K562 (cell line): ENCODE measurements at regions of chr14 and their contacts with region 1.

Region 1: GRCh38 chr14:21269252-21270046 is at the start of gene HNRNPC:
- DNase-seq: peak; percentile 92 to 97 (median 94)
- ATAC-seq: peak; percentile 92
- H3K4me3 ChIP-seq: peak within 1 kb of the TSS; percentile 71
- H3K27ac ChIP-seq: peak within 1 kb of the TSS; percentile 96
- H3K4me1 ChIP-seq: peaks cover 13 to 16% of the 10 kb centered on the region in 2 experiments; a peak in 4 of 5 replicates
- H3K27me3 ChIP-seq: no peaks in the 10 kb centered on the region
- CTCF ChIP-seq: no peak
- EP300 ChIP-seq: no peak
- POLR2A ChIP-seq: peak; percentile 98
- RAD21 ChIP-seq: no peak
- polyA plus RNA-seq, gene HNRNPC: 679 to 1,238 TPM

Region 2: GRCh38 chr14:21145437-21145836 is 124.0 kb before region 1 on chr14:
- CTCF ChIA-PET with region 1: no interaction called
- POLR2A ChIA-PET with region 1: no interaction called
- in situ Hi-C with region 1: no loop called
- intact Hi-C with region 1: no loop called
- DNase-seq: no peak
- ATAC-seq: no peak
- H3K4me3 ChIP-seq: no peak overlapping the region
- H3K27ac ChIP-seq: no peak overlapping the region
- H3K4me1 ChIP-seq: no peaks in the 10 kb centered on the region; a peak in 1 of 5 replicates
- H3K27me3 ChIP-seq: no peaks in the 10 kb centered on the region
- CTCF ChIP-seq: no peak
- EP300 ChIP-seq: no peak
- POLR2A ChIP-seq: no peak
- RAD21 ChIP-seq: no peak

Region 3: GRCh38 chr14:21257394-21257909 is 12.0 kb before region 1 on chr14:
- CTCF ChIA-PET with region 1: no interaction called
- POLR2A ChIA-PET with region 1: interaction called, 58 read pairs
- in situ Hi-C with region 1: no loop called
- intact Hi-C with region 1: no loop called
- DNase-seq: no peak
- ATAC-seq: peak; percentile 23
- H3K4me3 ChIP-seq: no peak overlapping the region
- H3K27ac ChIP-seq: no peak overlapping the region
- H3K4me1 ChIP-seq: peaks cover 4 to 5% of the 10 kb centered on the region in 2 experiments; a peak in 4 of 5 replicates
- H3K27me3 ChIP-seq: no peaks in the 10 kb centered on the region
- CTCF ChIP-seq: no peak
- EP300 ChIP-seq: no peak
- POLR2A ChIP-seq: peak; percentile 18; the same call in 1 of the 2 replicates
- RAD21 ChIP-seq: no peak

Region 4: DNA sequence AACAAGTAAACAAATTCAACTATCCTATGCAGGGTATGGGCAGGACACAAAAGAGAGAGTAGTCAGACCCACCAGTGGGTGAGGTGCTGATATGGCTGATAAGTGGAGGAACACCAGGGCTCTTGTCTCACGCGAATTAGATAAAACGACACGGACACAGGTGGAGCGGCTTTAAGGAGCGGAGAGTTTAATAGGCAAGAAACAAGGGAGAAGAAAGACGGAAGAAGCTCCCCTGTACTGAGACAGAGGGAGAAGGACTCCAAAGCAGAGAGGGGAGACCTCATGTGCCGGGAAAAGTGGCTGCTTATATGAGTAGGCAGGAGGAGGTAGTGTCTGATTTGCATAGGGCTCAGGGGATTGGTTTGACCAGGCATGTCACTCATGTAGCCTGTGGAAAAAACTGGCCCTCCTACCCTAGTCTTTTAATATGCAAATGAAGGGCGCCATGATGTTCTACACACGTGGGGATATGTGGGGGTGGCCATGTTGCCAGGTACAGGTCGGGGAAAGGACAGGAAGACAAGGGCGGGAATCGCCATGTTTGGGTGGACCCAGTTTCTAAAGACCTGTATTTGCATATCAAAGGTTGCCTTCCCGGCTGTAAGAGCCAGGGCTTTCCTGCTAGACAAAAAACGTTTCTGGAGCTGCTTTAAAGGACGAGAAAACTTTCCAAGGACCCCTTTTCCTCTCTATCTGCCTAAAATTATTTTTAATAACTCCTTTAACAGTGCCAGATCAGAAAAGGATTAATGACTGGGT is 39.2 kb after region 1 on chr14:
- CTCF ChIA-PET with region 1: no interaction called
- POLR2A ChIA-PET with region 1: interaction called, 4 read pairs
- in situ Hi-C with region 1: no loop called
- intact Hi-C with region 1: loop called (anchors 5 kb)
- DNase-seq: peak; percentile 39 to 93 (median 56)
- ATAC-seq: peak; percentile 94
- H3K4me3 ChIP-seq: peak overlapping the region; percentile 32
- H3K27ac ChIP-seq: peak overlapping the region; percentile 98
- H3K4me1 ChIP-seq: peaks cover 0 to 10% of the 10 kb centered on the region in 2 experiments; a peak in 3 of 5 replicates
- H3K27me3 ChIP-seq: no peaks in the 10 kb centered on the region
- CTCF ChIP-seq: no peak
- EP300 ChIP-seq: no peak
- POLR2A ChIP-seq: peak; percentile 95
- RAD21 ChIP-seq: no peak

Region 5: DNA sequence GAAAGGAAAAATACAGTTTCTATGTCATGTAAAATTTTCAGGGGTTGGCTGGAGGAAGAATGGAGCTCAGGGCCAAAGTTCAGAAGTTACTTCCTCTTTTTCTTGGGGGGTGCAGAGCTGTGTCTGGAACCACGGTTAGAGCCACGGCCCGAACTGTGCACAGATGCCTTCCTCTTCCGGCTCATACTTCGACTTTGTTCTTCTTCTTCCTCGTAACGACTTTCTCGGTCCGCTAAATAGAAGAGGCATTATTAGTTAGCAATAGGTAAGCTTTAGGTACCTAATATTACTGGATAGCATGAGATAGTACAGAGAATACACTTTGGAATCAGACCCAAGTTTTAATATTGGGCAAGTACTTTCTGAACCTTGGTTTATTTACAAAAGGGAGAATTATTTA is 83.1 kb after region 1 on chr14:
- CTCF ChIA-PET with region 1: no interaction called
- POLR2A ChIA-PET with region 1: interaction called, 4 read pairs
- in situ Hi-C with region 1: no loop called
- intact Hi-C with region 1: loop called (anchors 10 kb)
- DNase-seq: peak in 1 of 4 experiments; percentile 28
- ATAC-seq: peak; percentile 76
- H3K4me3 ChIP-seq: no peak overlapping the region
- H3K27ac ChIP-seq: no peak overlapping the region; the same call in 2 of the 3 replicates
- H3K4me1 ChIP-seq: no peaks in the 10 kb centered on the region
- H3K27me3 ChIP-seq: no peaks in the 10 kb centered on the region
- CTCF ChIP-seq: no peak
- EP300 ChIP-seq: no peak
- POLR2A ChIP-seq: no peak
- RAD21 ChIP-seq: no peak

Region 6: GRCh38 chr14:21383848-21384493 is 114.5 kb after region 1 on chr14 and contains the start of gene SUPT16H:
- CTCF ChIA-PET with region 1: no interaction called
- POLR2A ChIA-PET with region 1: interaction called, 6 read pairs
- in situ Hi-C with region 1: no loop called
- intact Hi-C with region 1: loop called (anchors 5 kb)
- DNase-seq: peak; percentile 82 to 96 (median 84)
- ATAC-seq: peak; percentile 96
- H3K4me3 ChIP-seq: peak within 1 kb of the TSS; percentile 74
- H3K27ac ChIP-seq: peak within 1 kb of the TSS; percentile 90
- H3K4me1 ChIP-seq: peaks cover 5 to 16% of the 10 kb centered on the region in 2 experiments; a peak in 3 of 5 replicates
- H3K27me3 ChIP-seq: no peaks in the 10 kb centered on the region
- CTCF ChIP-seq: no peak
- EP300 ChIP-seq: peak; percentile 36; the same call in 1 of the 2 replicates
- POLR2A ChIP-seq: peak; percentile 81
- RAD21 ChIP-seq: no peak
- polyA plus RNA-seq, gene SUPT16H: 75.6 to 105 TPM